ENCODE measurements at regions of chr9 and their contacts with region 1.

Region 1: GRCh38 chr9:36328798-36329411 is 70.7 kb upstream of the GNE start:
- DNase-seq: peak; percentile 73
- ATAC-seq: peak; percentile 83
- H3K4me3 ChIP-seq: no peak overlapping the region
- H3K27ac ChIP-seq: peak overlapping the region; percentile 71
- H3K4me1 ChIP-seq: peaks cover 13% of the 10 kb centered on the region
- H3K27me3 ChIP-seq: no peaks in the 10 kb centered on the region
- CTCF ChIP-seq: no peak

Region 2: DNA sequence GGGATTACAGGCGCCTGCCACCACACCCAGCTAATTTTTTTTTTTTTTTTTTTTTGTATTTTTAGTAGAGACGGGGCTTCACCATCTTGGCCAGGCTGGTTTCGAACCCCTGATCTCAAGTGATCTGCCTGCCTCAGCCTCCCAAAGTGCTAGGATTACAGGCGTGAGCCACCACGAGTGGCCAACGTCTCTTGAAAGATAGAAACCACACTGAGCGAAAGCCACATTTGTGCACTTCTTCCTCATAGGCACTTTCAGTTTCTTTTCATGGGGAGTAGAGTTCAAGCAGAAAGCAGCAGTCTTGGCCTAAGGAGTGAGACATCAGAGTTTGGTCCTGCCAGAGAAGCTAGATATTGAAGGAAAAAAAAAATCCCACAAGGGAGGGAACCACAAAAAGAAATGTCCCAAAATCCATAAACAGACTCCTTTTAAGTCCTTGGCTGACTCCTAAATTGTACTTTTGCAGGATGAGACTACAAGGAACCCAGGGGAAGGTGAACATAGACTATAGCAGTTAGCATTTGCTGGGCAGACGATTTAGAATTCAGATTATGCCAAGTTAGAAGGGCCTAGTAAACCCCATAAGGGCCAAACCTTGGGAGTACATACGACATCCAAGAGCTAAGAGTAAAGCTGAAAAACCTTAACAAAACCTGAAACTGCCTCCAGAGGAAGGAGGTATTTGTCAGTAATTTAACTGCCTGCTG is 236.2 kb before region 1 on chr9:
- CTCF ChIA-PET with region 1: no interaction called
- POLR2A ChIA-PET with region 1: no interaction called
- in situ Hi-C with region 1: no loop called
- intact Hi-C with region 1: no loop called
- DNase-seq: no peak
- ATAC-seq: no peak
- H3K4me3 ChIP-seq: no peak overlapping the region
- H3K27ac ChIP-seq: no peak overlapping the region
- H3K4me1 ChIP-seq: no peaks in the 10 kb centered on the region
- H3K27me3 ChIP-seq: no peaks in the 10 kb centered on the region
- CTCF ChIP-seq: no peak

Region 3: GRCh38 chr9:36102742-36103495 is 226.0 kb before region 1 on chr9:
- CTCF ChIA-PET with region 1: no interaction called
- POLR2A ChIA-PET with region 1: interaction called, 9 read pairs
- in situ Hi-C with region 1: no loop called
- intact Hi-C with region 1: loop called (anchors 10 kb)
- DNase-seq: peak; percentile 69
- ATAC-seq: peak; percentile 95
- H3K4me3 ChIP-seq: no peak overlapping the region
- H3K27ac ChIP-seq: no peak overlapping the region
- H3K4me1 ChIP-seq: peaks cover 3% of the 10 kb centered on the region; the same call in 1 of the 2 replicates
- H3K27me3 ChIP-seq: no peaks in the 10 kb centered on the region
- CTCF ChIP-seq: peak; percentile 98

Region 4: GRCh38 chr9:36250079-36250478 is 78.8 kb before region 1 on chr9:
- CTCF ChIA-PET with region 1: interaction called, 50 read pairs
- POLR2A ChIA-PET with region 1: no interaction called
- in situ Hi-C with region 1: no loop called
- intact Hi-C with region 1: loop called (anchors 1 kb)
- DNase-seq: no peak
- ATAC-seq: peak; percentile 17; the same call in 1 of the 2 replicates
- H3K4me3 ChIP-seq: no peak overlapping the region
- H3K27ac ChIP-seq: peak overlapping the region; percentile 19; the same call in 1 of the 2 replicates
- H3K4me1 ChIP-seq: peaks cover 8% of the 10 kb centered on the region; the same call in 1 of the 2 replicates
- H3K27me3 ChIP-seq: no peaks in the 10 kb centered on the region
- CTCF ChIP-seq: no peak

Region 5: GRCh38 chr9:36286388-36286787 is 42.5 kb before region 1 on chr9:
- CTCF ChIA-PET with region 1: no interaction called
- POLR2A ChIA-PET with region 1: interaction called, 14 read pairs
- in situ Hi-C with region 1: no loop called
- intact Hi-C with region 1: no loop called
- DNase-seq: no peak
- ATAC-seq: no peak
- H3K4me3 ChIP-seq: no peak overlapping the region
- H3K27ac ChIP-seq: no peak overlapping the region
- H3K4me1 ChIP-seq: no peaks in the 10 kb centered on the region
- H3K27me3 ChIP-seq: no peaks in the 10 kb centered on the region
- CTCF ChIP-seq: no peak

Region 6: DNA sequence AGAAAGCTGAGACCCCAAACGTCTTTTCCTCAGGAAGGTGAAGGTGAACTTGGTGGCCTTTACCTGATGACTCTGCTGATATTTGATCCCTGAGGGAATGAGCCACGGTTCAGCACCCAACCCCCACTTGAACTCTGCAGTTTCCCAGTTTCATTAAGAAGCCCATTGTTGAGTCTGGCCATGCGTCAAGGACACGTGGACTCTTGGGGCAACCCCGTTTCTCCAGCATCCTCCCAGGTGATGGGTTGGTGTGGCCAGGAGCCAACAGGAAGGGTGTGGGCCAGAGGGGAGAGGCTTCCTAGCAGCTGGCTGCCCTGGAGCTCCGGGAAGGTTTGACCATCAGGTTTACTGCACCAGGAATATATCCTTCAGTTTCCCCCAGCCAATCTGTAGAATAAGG is 11.1 kb before region 1 on chr9:
- CTCF ChIA-PET with region 1: interaction called, 10 read pairs
- POLR2A ChIA-PET with region 1: no interaction called
- in situ Hi-C with region 1: no loop called
- intact Hi-C with region 1: no loop called
- DNase-seq: no peak
- ATAC-seq: peak; percentile 13
- H3K4me3 ChIP-seq: no peak overlapping the region
- H3K27ac ChIP-seq: peak overlapping the region; percentile 67
- H3K4me1 ChIP-seq: peaks cover 36% of the 10 kb centered on the region
- H3K27me3 ChIP-seq: no peaks in the 10 kb centered on the region
- CTCF ChIP-seq: no peak

Region 7: DNA sequence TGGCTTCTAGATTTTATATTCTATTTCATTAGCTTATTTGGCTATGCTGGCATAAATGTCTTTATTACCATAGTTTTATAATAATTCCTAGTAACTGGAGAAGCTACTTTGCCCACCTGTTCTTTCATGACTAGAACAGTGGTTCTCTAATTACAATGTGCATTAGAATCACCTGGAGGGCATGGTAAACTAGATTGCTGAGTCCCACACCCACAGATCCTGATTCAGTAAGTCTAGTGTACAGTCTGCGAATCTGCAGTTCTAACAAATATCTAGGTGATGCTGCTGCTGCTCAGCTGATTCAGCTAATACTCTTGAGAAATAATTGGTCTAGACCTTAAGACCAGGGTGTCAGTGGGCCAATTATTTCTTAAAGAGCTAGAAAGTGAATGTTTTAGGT is 35.7 kb after region 1 on chr9:
- CTCF ChIA-PET with region 1: no interaction called
- POLR2A ChIA-PET with region 1: interaction called, 13 read pairs
- in situ Hi-C with region 1: no loop called
- intact Hi-C with region 1: no loop called
- DNase-seq: no peak
- ATAC-seq: no peak
- H3K4me3 ChIP-seq: no peak overlapping the region
- H3K27ac ChIP-seq: no peak overlapping the region
- H3K4me1 ChIP-seq: no peaks in the 10 kb centered on the region
- H3K27me3 ChIP-seq: no peaks in the 10 kb centered on the region
- CTCF ChIP-seq: no peak

Measured in Panc1 (cell line).